Mammary epithelial cell (primary cell): ENCODE measurements at regions of chr14 and their contacts with region 1.

Region 1: GRCh38 chr14:30820674-30821073 is 53.7 kb upstream of the COCH start:
- DNase-seq: no peak
- H3K4me3 ChIP-seq: no peak overlapping the region
- H3K27ac ChIP-seq: no peak overlapping the region
- H3K4me1 ChIP-seq: no peaks in the 10 kb centered on the region
- H3K27me3 ChIP-seq: no peaks in the 10 kb centered on the region
- CTCF ChIP-seq: no peak

Region 2: DNA sequence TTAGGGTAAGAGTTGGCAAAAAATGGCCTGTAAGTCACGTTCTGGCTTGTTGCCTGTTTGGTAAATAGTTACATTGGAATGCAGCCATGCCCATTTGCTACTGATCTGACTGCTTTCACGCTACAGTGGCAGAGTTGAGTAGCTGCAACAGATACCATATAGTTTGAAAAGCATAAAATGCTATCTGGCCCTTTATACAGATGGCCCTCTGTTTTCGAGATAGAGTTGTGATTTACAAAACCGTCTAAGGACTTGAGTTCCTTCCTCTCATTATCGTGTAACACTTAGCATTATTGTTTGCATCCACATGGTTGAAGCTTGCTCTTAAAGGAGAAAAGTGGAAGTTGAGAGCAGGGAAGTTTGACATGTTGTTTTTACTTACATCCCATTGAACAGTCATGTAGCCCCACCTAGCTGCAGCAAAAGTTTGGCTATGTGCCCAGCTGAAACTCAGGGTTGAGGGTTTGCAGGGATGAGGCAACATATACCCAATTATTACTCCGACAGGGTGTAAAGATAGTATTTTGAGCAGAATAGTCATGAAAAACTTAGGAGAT is 209.8 kb before region 1 on chr14:
- CTCF ChIA-PET with region 1: no interaction called
- dilution Hi-C with region 1: no loop called
- in situ Hi-C with region 1: no loop called
- intact Hi-C with region 1: no loop called
- DNase-seq: peak; percentile 40
- H3K4me3 ChIP-seq: no peak overlapping the region
- H3K27ac ChIP-seq: no peak overlapping the region
- H3K4me1 ChIP-seq: peaks cover 9% of the 10 kb centered on the region
- H3K27me3 ChIP-seq: no peaks in the 10 kb centered on the region
- CTCF ChIP-seq: peak in 1 of 2 donors; percentile 26

Region 3: GRCh38 chr14:30869551-30870155 is 49.0 kb after region 1 on chr14:
- CTCF ChIA-PET with region 1: no interaction called
- dilution Hi-C with region 1: no loop called
- in situ Hi-C with region 1: no loop called
- intact Hi-C with region 1: loop called (anchors 1 kb)
- DNase-seq: no peak
- H3K4me3 ChIP-seq: no peak overlapping the region
- H3K27ac ChIP-seq: no peak overlapping the region
- H3K4me1 ChIP-seq: peaks cover 8% of the 10 kb centered on the region
- H3K27me3 ChIP-seq: peaks cover 14% of the 10 kb centered on the region
- CTCF ChIP-seq: no peak

Region 4: DNA sequence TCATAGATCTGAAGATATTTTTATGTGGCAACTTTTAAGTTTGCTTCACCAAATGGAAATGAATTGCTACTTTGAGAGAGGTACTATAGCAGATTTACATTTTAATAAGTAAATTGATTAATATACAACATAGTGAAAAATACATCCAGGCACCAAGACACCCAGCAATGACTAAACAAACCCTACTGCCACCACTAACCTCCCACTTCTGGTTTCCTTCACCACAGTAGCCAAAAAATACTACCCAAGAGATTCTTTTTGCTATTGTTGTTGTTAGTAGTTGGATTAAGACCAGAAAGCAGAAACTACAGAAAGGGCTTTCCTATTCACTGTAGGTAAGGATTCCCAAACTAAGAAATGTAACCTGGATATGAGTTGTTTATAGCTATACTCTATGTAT is 107.8 kb after region 1 on chr14:
- CTCF ChIA-PET with region 1: no interaction called
- dilution Hi-C with region 1: no loop called
- in situ Hi-C with region 1: no loop called
- intact Hi-C with region 1: no loop called
- DNase-seq: no peak
- H3K4me3 ChIP-seq: no peak overlapping the region
- H3K27ac ChIP-seq: no peak overlapping the region
- H3K4me1 ChIP-seq: no peaks in the 10 kb centered on the region
- H3K27me3 ChIP-seq: no peaks in the 10 kb centered on the region
- CTCF ChIP-seq: no peak

Region 5: DNA sequence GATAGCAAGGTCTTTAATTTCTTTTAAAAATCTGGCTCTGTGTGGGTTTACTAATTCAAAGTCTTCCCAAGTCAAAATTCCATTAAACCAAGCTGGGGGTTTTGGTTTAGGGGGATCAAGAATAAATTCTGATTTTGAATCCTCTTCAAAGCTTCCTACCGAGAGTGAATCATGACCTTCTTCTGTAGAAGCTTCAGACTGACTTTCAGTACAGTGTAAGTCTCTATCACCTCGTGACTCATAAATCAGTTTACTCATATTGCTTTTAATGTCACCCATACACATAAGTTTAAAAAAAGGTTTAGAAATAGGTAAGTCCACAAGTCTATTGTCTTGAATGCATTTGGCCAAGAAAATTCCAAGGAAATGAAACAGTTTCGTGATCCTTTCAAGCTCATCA is 286.1 kb after region 1 on chr14:
- CTCF ChIA-PET with region 1: no interaction called
- dilution Hi-C with region 1: no loop called
- in situ Hi-C with region 1: no loop called
- intact Hi-C with region 1: no loop called
- DNase-seq: no peak
- H3K4me3 ChIP-seq: no peak overlapping the region
- H3K27ac ChIP-seq: no peak overlapping the region
- H3K4me1 ChIP-seq: no peaks in the 10 kb centered on the region
- H3K27me3 ChIP-seq: no peaks in the 10 kb centered on the region
- CTCF ChIP-seq: no peak